ENCODE measurements at regions of chr7 and their contacts with region 1.

Region 1: DNA sequence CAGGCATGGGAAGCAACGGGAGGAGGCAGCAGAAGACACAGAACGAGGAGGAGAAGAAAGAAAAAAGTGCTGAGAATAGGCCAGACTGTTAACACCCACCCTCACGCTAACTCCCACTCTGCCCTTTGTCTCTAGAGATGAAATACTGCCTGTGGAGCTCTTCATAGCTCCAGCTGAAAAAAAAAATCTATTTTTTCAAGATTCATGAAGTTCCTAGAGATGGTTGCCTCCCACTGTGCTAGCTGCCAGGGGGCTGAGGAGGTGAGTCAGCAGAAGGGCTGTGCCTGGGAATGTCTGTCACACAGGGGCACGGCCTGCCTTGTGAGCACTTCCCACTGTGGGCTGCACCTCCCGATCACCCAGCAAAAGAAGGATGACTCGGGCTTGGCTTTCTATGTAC is 144.5 kb downstream of the RNF216 start:
- DNase-seq: peak; percentile 35 to 95 (median 52)

Region 2: DNA sequence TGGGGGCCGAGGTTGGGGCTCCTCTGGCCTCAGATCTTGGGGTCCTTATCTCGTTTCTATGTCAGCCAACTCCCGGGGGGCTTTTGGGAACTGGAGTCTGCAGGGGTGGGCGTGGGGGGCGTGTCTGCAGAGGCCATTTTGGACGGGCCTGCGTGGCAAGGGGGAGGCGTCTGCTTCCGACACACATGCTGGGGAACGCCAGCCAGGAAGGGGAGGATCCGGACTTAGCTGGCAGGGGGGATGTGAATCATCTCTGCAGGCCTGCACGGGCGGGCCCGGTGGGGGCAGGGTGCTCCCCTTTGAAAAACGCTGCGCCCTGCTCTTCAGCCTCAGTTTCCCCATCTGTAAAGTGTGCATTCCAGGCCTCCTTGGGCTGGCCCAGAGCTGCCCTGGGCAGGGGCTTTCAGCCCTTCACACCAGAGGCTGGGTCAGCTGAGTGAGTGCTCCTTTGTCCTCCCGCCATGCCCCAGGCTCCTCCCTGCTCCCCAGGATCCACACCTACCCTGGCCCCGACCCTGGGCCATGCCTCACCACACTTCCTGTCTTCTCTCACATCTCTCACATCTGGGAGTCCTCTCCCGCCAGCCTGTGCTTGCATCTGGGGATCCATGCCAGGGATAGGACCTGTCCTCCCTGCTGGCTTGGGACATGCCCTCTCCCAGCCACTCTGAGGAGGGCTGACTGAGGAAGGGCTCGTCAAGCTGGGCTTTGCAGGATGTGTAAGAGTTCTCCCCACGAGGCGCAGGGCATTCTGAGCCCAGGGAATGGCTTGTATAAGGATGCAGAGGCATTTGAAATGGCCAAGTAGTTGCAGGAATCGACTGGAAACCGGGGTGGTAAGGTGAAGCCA is 40.6 kb before region 1 on chr7:
- intact Hi-C with region 1: loop called (anchors 5 kb)
- DNase-seq: peak; percentile 48 to 95 (median 70)